Heart right ventricle (tissue), 16 donors: ENCODE measurements at regions of chr5 and their contacts with region 1.

Region 1: DNA sequence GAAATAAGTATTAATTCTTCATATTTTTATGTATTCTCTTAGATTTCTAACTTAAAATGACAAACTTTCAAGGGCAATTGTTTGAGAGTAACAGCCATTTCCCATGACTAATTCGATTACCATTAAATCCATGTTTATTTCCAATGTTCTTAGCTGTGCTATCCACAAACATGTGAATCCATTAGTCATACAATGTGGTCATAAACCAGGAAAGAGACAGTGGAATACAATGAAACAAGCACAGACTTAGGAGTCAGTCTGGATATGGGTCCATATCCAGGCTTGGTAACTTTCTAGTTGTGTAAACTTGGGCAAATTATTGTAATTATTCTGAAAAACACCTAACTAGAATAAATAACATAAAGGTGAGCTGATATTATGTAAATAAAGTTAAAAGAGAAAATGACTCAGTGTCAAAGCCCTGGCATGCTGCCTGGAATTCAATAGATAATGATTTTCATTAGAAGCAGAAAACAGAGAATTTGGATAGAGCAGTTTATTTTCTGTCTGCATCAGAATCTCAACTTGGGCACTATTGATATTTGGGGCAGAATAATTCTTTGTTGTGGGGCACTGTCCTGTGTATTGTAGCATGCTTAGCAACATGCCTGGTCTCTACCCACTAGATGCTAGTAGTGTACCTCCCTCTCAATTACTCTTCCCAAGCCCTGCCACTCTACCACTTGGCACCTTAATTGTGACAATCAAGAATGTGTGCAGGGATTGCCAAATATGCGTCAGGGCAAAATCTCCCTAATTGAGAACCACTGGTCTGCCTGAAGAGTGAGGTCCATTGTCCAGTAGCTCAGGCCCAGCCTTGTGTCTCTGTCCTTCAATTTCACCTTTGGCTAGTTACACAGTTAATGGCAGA is 44.7 kb upstream of the SLC27A6 start:
- DNase-seq: peak in 1 of 2 donors; percentile 61
- ATAC-seq: peak; percentile 81 to 96 (median 92)
- H3K4me3 ChIP-seq: no peak overlapping the region
- H3K27ac ChIP-seq: peak overlapping the region in 8 of 10 donors; percentile 11 to 75 (median 60)
- H3K4me1 ChIP-seq: peaks cover 0 to 5% (median 0%) of the 10 kb centered on the region in 9 donors
- H3K27me3 ChIP-seq: no peaks in the 10 kb centered on the region
- CTCF ChIP-seq: no peak

Region 2: GRCh38 chr5:128384068-128384467 is 536.5 kb before region 1 on chr5:
- intact Hi-C with region 1: no loop called
- DNase-seq: no peak
- ATAC-seq: no peak
- H3K4me3 ChIP-seq: no peak overlapping the region
- H3K27ac ChIP-seq: no peak overlapping the region
- H3K4me1 ChIP-seq: no peaks in the 10 kb centered on the region
- H3K27me3 ChIP-seq: no peaks in the 10 kb centered on the region
- CTCF ChIP-seq: no peak

Region 3: GRCh38 chr5:128965011-128965637 is 44.5 kb after region 1 on chr5 and contains the start of gene SLC27A6:
- intact Hi-C with region 1: loop called in 3 of 10 experiments (anchors 5 to 10 kb)
- DNase-seq: peak; percentile 30 to 54
- ATAC-seq: peak; percentile 87 to 99 (median 96)
- H3K4me3 ChIP-seq: peak within 1 kb of the TSS; percentile 23 to 63 (median 54)
- H3K27ac ChIP-seq: peak within 1 kb of the TSS; percentile 6 to 85 (median 78)
- H3K4me1 ChIP-seq: peaks cover 0 to 5% (median 0%) of the 10 kb centered on the region in 9 donors
- H3K27me3 ChIP-seq: peaks cover 0 to 29% (median 15%) of the 10 kb centered on the region in 7 donors
- CTCF ChIP-seq: no peak
- total RNA-seq, gene SLC27A6: 36.5 to 125 (median 61.4) TPM

Region 4: DNA sequence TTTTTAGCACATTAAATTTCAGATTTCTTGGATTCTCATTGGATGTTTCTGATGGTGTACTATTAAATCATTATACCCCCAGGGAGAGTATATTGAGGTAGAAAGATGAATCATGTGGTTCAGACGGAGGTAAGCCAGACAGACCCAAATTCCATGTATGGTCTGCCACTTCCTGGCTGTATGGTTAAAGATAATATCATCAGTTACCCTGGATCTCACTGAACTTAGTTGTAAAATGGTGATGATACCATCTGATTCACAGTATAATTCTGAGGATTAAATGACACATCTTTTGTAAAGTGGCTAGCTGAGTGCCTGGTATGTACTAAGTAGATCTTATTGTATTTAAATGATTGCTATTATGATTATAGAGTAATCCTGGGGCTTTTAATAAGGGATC is 54.0 kb after region 1 on chr5:
- intact Hi-C with region 1: loop called in 2 of 10 experiments (anchors 5 to 10 kb)
- DNase-seq: no peak
- ATAC-seq: no peak
- H3K4me3 ChIP-seq: no peak overlapping the region
- H3K27ac ChIP-seq: no peak overlapping the region
- H3K4me1 ChIP-seq: peaks cover 0 to 5% (median 0%) of the 10 kb centered on the region in 9 donors
- H3K27me3 ChIP-seq: no peaks in the 10 kb centered on the region
- CTCF ChIP-seq: no peak